ENCODE measurements at regions of chr7 and their contacts with region 1.

Region 1: GRCh38 chr7:78226059-78226719 is 427.6 kb downstream of the PHTF2 start:
- DNase-seq: no peak
- H3K4me3 Mint-ChIP-seq: no peak overlapping the region
- H3K27ac Mint-ChIP-seq: no peak overlapping the region
- H3K4me1 Mint-ChIP-seq: no peaks in the 10 kb centered on the region
- H3K27me3 Mint-ChIP-seq: no peaks in the 10 kb centered on the region

Region 2: DNA sequence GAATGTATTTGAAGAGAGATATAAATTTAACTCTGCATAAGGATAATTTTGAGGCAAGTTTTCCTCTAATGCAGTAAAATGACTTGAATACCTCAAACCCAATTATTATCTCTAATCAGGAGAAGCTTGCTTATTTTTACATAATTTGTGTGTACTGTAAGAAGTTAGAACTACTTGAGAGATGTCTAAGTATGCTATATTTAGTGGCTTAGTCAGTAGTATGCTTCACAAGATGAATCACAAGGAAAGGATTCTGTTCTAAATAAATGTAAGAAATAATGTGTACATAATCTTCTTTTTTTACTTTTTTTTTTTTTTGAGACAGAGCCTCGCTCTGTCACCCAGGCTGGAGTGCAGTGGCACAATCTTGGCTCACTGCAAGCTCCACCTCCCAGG is 413.9 kb before region 1 on chr7:
- intact Hi-C with region 1: no loop called
- DNase-seq: no peak
- H3K4me3 Mint-ChIP-seq: no peak overlapping the region
- H3K27ac Mint-ChIP-seq: no peak overlapping the region
- H3K4me1 Mint-ChIP-seq: peaks cover 18% of the 10 kb centered on the region
- H3K27me3 Mint-ChIP-seq: no peaks in the 10 kb centered on the region

Region 3: GRCh38 chr7:77940647-77941046 is 285.5 kb before region 1 on chr7:
- intact Hi-C with region 1: loop called (anchors 5 kb)
- DNase-seq: no peak
- H3K4me3 Mint-ChIP-seq: no peak overlapping the region
- H3K27ac Mint-ChIP-seq: no peak overlapping the region
- H3K4me1 Mint-ChIP-seq: peaks cover 11% of the 10 kb centered on the region
- H3K27me3 Mint-ChIP-seq: no peaks in the 10 kb centered on the region